CD4-positive, alpha-beta memory T cell (primary cell): ENCODE measurements at regions of chr17 and their contacts with region 1.

Region 1: DNA sequence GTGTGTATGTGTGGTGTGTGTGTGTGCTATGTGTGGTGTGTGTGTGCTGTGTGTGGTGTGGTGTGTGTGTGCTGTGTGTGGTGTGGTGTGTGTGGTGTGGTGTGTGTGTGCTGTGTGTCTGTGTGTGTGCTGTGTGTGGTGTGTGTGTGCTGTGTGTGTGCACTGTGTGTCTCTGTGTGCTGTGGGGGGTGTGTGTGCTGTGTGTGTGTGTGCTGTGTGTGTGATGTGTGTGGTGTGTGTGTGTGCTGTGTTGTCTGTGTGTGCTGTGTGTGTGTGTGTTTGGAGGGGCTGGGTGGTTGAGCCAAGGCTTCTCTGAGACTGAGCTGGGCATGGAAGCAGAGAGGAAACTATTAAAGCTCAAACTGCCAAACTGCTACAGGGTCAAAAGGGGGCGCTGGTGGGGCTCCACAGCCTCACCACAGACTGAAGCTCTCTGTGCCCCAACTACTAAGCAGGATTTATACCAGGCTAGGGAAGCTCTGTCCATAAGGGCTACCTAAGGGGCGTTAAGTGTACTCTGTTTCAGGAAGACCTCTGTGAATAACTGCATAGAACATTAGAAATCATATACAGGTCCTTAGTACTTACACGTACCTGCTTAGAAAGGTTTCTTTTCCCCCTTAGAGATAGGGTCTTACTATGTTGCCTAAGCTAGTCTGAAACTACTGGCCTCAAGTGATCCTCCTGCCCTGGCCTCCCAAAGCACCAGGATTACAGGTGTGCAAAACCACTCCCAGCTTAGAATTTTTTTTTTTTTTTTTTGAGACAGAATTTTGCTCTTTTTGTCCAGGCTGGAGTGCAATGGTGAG is 27.8 kb upstream of the GHDC start:
- DNase-seq: peak; percentile 58 to 67 (median 66)
- H3K4me3 ChIP-seq: no peak overlapping the region
- H3K4me3 Mint-ChIP-seq: no peak overlapping the region
- H3K27ac ChIP-seq: no peak overlapping the region
- H3K27ac Mint-ChIP-seq: peak overlapping the region in 6 of 7 donors; percentile 66 to 85 (median 80)
- H3K4me1 ChIP-seq: no peaks in the 10 kb centered on the region
- H3K4me1 Mint-ChIP-seq: peaks cover 5 to 8% (median 7%) of the 10 kb centered on the region in 4 donors
- H3K27me3 ChIP-seq: no peaks in the 10 kb centered on the region
- H3K27me3 Mint-ChIP-seq: no peaks in the 10 kb centered on the region

Region 2: GRCh38 chr17:41918314-41919164 is 303.6 kb before region 1 on chr17 and contains the start of gene ACLY:
- CTCF ChIA-PET with region 1: no interaction called
- POLR2A ChIA-PET with region 1: no interaction called
- intact Hi-C with region 1: no loop called
- DNase-seq: peak; percentile 93 to 94 (median 93)
- H3K4me3 ChIP-seq: peak within 1 kb of the TSS; percentile 78 to 97
- H3K4me3 Mint-ChIP-seq: peak within 1 kb of the TSS; percentile 87 to 96 (median 90)
- H3K27ac ChIP-seq: peak within 1 kb of the TSS; percentile 88
- H3K27ac Mint-ChIP-seq: peak within 1 kb of the TSS; percentile 76 to 93 (median 87)
- H3K4me1 ChIP-seq: peaks cover 48% of the 10 kb centered on the region
- H3K4me1 Mint-ChIP-seq: peaks cover 23 to 46% (median 33%) of the 10 kb centered on the region in 4 donors
- H3K27me3 ChIP-seq: no peaks in the 10 kb centered on the region
- H3K27me3 Mint-ChIP-seq: no peaks in the 10 kb centered on the region
- total RNA-seq, gene ACLY: 84.4 to 88.5 TPM

Region 3: GRCh38 chr17:42067351-42068091 is 154.6 kb before region 1 on chr17:
- CTCF ChIA-PET with region 1: no interaction called
- POLR2A ChIA-PET with region 1: no interaction called
- intact Hi-C with region 1: no loop called
- DNase-seq: peak; percentile 48 to 66 (median 59)
- H3K4me3 ChIP-seq: no peak overlapping the region
- H3K4me3 Mint-ChIP-seq: no peak overlapping the region
- H3K27ac ChIP-seq: no peak overlapping the region
- H3K27ac Mint-ChIP-seq: no peak overlapping the region
- H3K4me1 ChIP-seq: peaks cover 18% of the 10 kb centered on the region
- H3K4me1 Mint-ChIP-seq: peaks cover 2 to 8% (median 6%) of the 10 kb centered on the region in 4 donors
- H3K27me3 ChIP-seq: peaks cover 13% of the 10 kb centered on the region
- H3K27me3 Mint-ChIP-seq: peaks cover 8 to 15% of the 10 kb centered on the region in 2 donors

Region 4: GRCh38 chr17:42200702-42201101 is 21.4 kb before region 1 on chr17:
- CTCF ChIA-PET with region 1: interaction called, 11 read pairs
- POLR2A ChIA-PET with region 1: interaction called, 4 read pairs
- intact Hi-C with region 1: no loop called
- DNase-seq: no peak
- H3K4me3 ChIP-seq: no peak overlapping the region
- H3K4me3 Mint-ChIP-seq: no peak overlapping the region
- H3K27ac ChIP-seq: no peak overlapping the region
- H3K27ac Mint-ChIP-seq: peak overlapping the region in 1 of 7 donors; percentile 60
- H3K4me1 ChIP-seq: no peaks in the 10 kb centered on the region
- H3K4me1 Mint-ChIP-seq: peaks cover 0 to 8% (median 4%) of the 10 kb centered on the region in 4 donors
- H3K27me3 ChIP-seq: no peaks in the 10 kb centered on the region
- H3K27me3 Mint-ChIP-seq: no peaks in the 10 kb centered on the region

Region 5: DNA sequence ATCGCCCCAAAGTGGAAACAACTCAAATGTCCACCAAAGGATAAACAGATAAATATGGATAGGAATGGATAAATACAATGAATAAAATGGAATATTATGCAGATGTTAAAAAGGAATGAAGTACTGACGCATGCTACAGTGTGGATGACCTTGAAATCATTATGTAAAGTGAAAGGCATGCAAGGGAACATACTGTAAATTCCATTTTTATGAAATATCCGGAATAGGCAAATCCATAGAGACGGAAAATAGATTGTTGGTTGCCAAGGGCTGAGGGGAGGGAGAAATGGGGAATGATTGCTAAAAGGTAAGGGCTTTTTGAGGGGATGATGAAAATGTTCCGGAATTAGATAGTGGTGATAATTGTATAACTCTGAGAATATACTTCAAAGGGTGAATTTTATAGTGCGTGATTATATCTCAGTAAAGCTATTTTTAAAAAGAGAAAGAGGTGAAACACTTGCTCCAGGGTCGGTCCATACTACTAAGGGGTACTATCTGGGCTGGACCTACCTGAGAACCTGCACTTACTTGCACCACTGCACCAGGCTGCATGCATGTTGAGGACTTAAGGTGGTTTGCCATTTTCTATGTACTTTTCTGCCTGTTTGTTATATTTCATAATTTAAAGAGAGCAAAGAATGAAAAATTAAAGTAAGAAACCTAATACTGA is 18.2 kb after region 1 on chr17:
- CTCF ChIA-PET with region 1: interaction called, 22 read pairs
- POLR2A ChIA-PET with region 1: no interaction called
- intact Hi-C with region 1: no loop called
- DNase-seq: no peak
- H3K4me3 ChIP-seq: no peak overlapping the region
- H3K4me3 Mint-ChIP-seq: peak overlapping the region in 2 of 8 donors; percentile 1 to 26
- H3K27ac ChIP-seq: no peak overlapping the region
- H3K27ac Mint-ChIP-seq: peak overlapping the region; percentile 14 to 71 (median 53)
- H3K4me1 ChIP-seq: peaks cover 46% of the 10 kb centered on the region
- H3K4me1 Mint-ChIP-seq: peaks cover 36 to 65% (median 49%) of the 10 kb centered on the region in 4 donors
- H3K27me3 ChIP-seq: no peaks in the 10 kb centered on the region
- H3K27me3 Mint-ChIP-seq: no peaks in the 10 kb centered on the region

Region 6: DNA sequence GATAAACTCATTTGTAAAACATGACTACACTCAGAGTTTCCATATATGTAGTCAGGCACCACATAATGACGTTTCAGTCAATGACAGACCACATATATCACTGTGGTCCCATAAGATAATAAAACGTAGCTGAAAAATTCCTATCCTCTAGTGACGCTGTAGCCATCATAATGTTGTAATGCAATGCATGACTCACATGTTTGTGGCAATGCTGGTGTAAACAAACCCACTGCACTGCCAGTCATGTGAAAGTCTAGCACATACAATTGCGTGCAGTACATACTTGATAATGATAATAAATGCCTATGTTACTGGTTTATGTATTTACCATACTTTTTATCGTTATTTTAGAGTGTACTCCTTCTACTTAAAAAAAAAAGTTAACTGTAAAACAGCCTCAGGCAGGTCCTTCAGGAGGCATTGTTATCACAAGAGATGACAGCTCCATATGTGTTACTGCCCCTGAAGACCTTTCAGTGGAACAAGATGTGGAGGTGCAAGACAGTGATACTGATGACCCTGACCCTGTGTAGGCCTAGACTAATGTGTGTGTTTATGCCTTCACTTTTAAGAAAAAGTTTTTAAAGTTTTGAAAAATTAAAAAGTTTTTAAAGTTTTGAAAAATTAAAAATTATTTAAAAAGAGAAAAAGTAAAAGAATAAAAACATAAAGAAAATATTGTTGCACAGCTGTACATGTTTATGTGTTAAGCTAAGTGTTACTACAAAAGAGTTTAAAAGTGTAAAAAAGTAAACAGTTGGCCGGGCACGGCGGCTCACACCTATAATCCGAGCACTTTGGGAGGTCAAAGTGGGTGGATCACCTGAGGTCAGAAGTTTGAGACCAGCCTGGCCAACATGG is 45.0 kb after region 1 on chr17:
- CTCF ChIA-PET with region 1: interaction called, 12 read pairs
- POLR2A ChIA-PET with region 1: interaction called, 6 read pairs
- intact Hi-C with region 1: loop called (anchors 10 kb)
- DNase-seq: peak; percentile 61 to 92 (median 77)
- H3K4me3 ChIP-seq: no peak overlapping the region
- H3K4me3 Mint-ChIP-seq: peak overlapping the region in 7 of 8 donors; percentile 5 to 82 (median 40)
- H3K27ac ChIP-seq: peak overlapping the region; percentile 92
- H3K27ac Mint-ChIP-seq: peak overlapping the region; percentile 94 to 99 (median 95)
- H3K4me1 ChIP-seq: peaks cover 69% of the 10 kb centered on the region
- H3K4me1 Mint-ChIP-seq: peaks cover 41 to 72% (median 56%) of the 10 kb centered on the region in 4 donors
- H3K27me3 ChIP-seq: no peaks in the 10 kb centered on the region
- H3K27me3 Mint-ChIP-seq: no peaks in the 10 kb centered on the region

Region 7: GRCh38 chr17:42287926-42288802 is 66.0 kb after region 1 on chr17 and contains the start of gene STAT5A:
- CTCF ChIA-PET with region 1: interaction called, 68 read pairs
- POLR2A ChIA-PET with region 1: interaction called, 49 read pairs
- intact Hi-C with region 1: loop called (anchors 1 kb)
- DNase-seq: peak; percentile 81 to 89 (median 83)
- H3K4me3 ChIP-seq: peak within 1 kb of the TSS; percentile 86 to 88
- H3K4me3 Mint-ChIP-seq: peak within 1 kb of the TSS; percentile 90 to 97 (median 94)
- H3K27ac ChIP-seq: peak within 1 kb of the TSS; percentile 87
- H3K27ac Mint-ChIP-seq: peak within 1 kb of the TSS; percentile 92 to 99 (median 97)
- H3K4me1 ChIP-seq: peaks cover 48% of the 10 kb centered on the region
- H3K4me1 Mint-ChIP-seq: peaks cover 37 to 62% (median 47%) of the 10 kb centered on the region in 4 donors
- H3K27me3 ChIP-seq: no peaks in the 10 kb centered on the region
- H3K27me3 Mint-ChIP-seq: no peaks in the 10 kb centered on the region
- total RNA-seq, gene STAT5A: 130 to 133 TPM

Region 8: GRCh38 chr17:42312285-42313130 is 90.4 kb after region 1 on chr17:
- CTCF ChIA-PET with region 1: interaction called, 56 read pairs
- POLR2A ChIA-PET with region 1: interaction called, 20 read pairs
- intact Hi-C with region 1: loop called (anchors 1 kb)
- DNase-seq: peak; percentile 69 to 80 (median 73)
- H3K4me3 ChIP-seq: peak overlapping the region in 1 of 2 donors; percentile 11
- H3K4me3 Mint-ChIP-seq: peak overlapping the region; percentile 37 to 80 (median 70)
- H3K27ac ChIP-seq: peak overlapping the region; percentile 46
- H3K27ac Mint-ChIP-seq: peak overlapping the region; percentile 75 to 89 (median 86)
- H3K4me1 ChIP-seq: peaks cover 70% of the 10 kb centered on the region
- H3K4me1 Mint-ChIP-seq: peaks cover 40 to 75% (median 53%) of the 10 kb centered on the region in 4 donors
- H3K27me3 ChIP-seq: no peaks in the 10 kb centered on the region
- H3K27me3 Mint-ChIP-seq: no peaks in the 10 kb centered on the region

Region 9: DNA sequence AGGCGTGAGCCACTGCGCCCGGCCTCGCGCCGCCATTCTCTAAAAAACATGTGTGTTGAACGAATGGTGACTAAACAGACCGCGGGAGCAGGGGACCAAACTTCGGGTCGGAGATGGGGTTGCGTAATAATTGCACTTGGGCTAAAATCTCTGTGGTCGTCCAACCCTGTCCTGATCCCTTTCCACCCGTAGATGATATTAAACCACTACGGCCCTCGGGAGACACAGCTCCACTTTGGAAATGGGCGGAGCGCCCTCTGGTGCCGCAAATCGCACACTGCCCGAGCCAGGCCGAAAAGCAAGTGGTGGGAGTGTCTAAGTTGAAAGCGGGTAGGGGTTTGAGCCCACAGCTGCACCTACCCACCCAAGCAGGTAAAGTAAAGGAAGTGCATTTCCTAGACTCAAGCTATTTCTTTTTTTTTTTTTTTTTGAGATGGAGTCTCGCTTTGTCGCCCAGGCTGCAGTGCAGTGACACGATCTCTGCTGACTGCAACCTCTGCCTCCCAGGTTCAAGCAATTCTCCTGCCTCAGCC is 183.9 kb after region 1 on chr17:
- CTCF ChIA-PET with region 1: interaction called, 31 read pairs
- POLR2A ChIA-PET with region 1: no interaction called
- intact Hi-C with region 1: no loop called
- DNase-seq: peak; percentile 76 to 81 (median 79)
- H3K4me3 ChIP-seq: no peak overlapping the region
- H3K4me3 Mint-ChIP-seq: no peak overlapping the region
- H3K27ac ChIP-seq: no peak overlapping the region
- H3K27ac Mint-ChIP-seq: peak overlapping the region in 6 of 7 donors; percentile 19 to 68 (median 38)
- H3K4me1 ChIP-seq: peaks cover 4% of the 10 kb centered on the region
- H3K4me1 Mint-ChIP-seq: peaks cover 8 to 17% (median 10%) of the 10 kb centered on the region in 4 donors
- H3K27me3 ChIP-seq: no peaks in the 10 kb centered on the region
- H3K27me3 Mint-ChIP-seq: no peaks in the 10 kb centered on the region

Region 10: DNA sequence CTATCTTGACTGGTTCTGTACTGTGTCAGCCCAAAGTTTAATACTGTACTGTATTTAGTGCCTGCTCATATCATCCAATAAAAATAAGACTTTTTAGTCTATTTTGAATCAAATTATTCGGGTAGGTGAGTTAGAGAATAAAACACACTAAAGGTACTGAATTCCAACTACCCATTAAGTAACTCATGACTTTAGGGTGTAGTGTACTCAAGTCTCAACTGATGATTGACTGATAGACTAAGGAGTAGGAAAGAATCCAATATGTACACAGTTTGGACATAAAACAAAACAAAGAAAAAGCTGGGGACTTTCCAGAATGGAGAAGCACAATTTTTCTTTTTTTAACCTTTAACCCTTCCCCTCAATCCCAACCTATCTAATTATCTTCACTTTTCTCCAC is 518.6 kb after region 1 on chr17:
- CTCF ChIA-PET with region 1: no interaction called
- POLR2A ChIA-PET with region 1: no interaction called
- intact Hi-C with region 1: no loop called
- DNase-seq: no peak
- H3K4me3 ChIP-seq: no peak overlapping the region
- H3K4me3 Mint-ChIP-seq: no peak overlapping the region
- H3K27ac ChIP-seq: no peak overlapping the region
- H3K27ac Mint-ChIP-seq: no peak overlapping the region
- H3K4me1 ChIP-seq: peaks cover 25% of the 10 kb centered on the region
- H3K4me1 Mint-ChIP-seq: peaks cover 12 to 38% (median 25%) of the 10 kb centered on the region in 4 donors
- H3K27me3 ChIP-seq: no peaks in the 10 kb centered on the region
- H3K27me3 Mint-ChIP-seq: no peaks in the 10 kb centered on the region